Calu3 (cell line): ENCODE measurements at regions of chr20 and their contacts with region 1.

Region 1: GRCh38 chr20:50663095-50663850 is 28.1 kb downstream of the RIPOR3 start:
- DNase-seq: peak; percentile 79
- H3K4me3 Mint-ChIP-seq: no peak overlapping the region
- H3K27ac Mint-ChIP-seq: peak overlapping the region; percentile 83
- H3K4me1 Mint-ChIP-seq: peaks cover 84% of the 10 kb centered on the region
- H3K27me3 Mint-ChIP-seq: no peaks in the 10 kb centered on the region
- CTCF ChIP-seq: peak; percentile 63

Region 2: GRCh38 chr20:50635667-50636503 is 27.4 kb before region 1 on chr20:
- CTCF ChIA-PET with region 1: interaction called, 10 read pairs
- intact Hi-C with region 1: no loop called
- DNase-seq: peak; percentile 96
- H3K4me3 Mint-ChIP-seq: peak overlapping the region; percentile 15
- H3K27ac Mint-ChIP-seq: peak overlapping the region; percentile 48
- H3K4me1 Mint-ChIP-seq: peaks cover 39% of the 10 kb centered on the region
- H3K27me3 Mint-ChIP-seq: no peaks in the 10 kb centered on the region
- CTCF ChIP-seq: peak; percentile 99

Region 3: GRCh38 chr20:50680412-50680908 is 17.2 kb after region 1 on chr20:
- CTCF ChIA-PET with region 1: interaction called, 18 read pairs
- intact Hi-C with region 1: loop called (anchors 2 kb)
- DNase-seq: peak; percentile 83
- H3K4me3 Mint-ChIP-seq: peak overlapping the region; percentile 62
- H3K27ac Mint-ChIP-seq: peak overlapping the region; percentile 84
- H3K4me1 Mint-ChIP-seq: peaks cover 48% of the 10 kb centered on the region
- H3K27me3 Mint-ChIP-seq: no peaks in the 10 kb centered on the region
- CTCF ChIP-seq: no peak

Region 4: DNA sequence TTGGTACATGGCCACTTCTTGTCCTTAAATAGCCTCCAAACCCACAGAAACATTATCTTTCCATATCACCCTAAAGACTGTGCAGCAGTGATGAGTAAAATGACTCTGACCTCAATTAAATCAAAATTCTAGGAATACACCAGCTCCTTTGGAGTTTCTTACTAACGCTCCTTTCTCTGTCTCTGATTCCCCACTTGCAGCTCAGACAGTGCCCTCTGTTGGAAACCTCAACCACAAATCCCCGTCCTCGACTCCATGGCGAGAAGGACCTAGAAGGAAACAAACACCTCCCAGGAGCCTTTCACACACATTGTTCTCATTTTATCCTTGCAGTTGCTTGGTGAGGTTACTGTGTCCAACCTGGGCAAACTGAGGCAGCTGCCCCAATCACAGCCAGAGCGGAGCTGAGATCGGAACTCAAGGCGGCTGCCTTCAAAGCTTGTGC is 50.4 kb after region 1 on chr20:
- CTCF ChIA-PET with region 1: interaction called, 19 read pairs
- intact Hi-C with region 1: loop called (anchors 2 kb)
- DNase-seq: peak; percentile 59
- H3K4me3 Mint-ChIP-seq: no peak overlapping the region
- H3K27ac Mint-ChIP-seq: no peak overlapping the region
- H3K4me1 Mint-ChIP-seq: peaks cover 55% of the 10 kb centered on the region
- H3K27me3 Mint-ChIP-seq: no peaks in the 10 kb centered on the region
- CTCF ChIP-seq: peak; percentile 38

Region 5: GRCh38 chr20:50737352-50737751 is 74.1 kb after region 1 on chr20:
- CTCF ChIA-PET with region 1: interaction called, 82 read pairs
- intact Hi-C with region 1: loop called (anchors 2 kb)
- DNase-seq: peak; percentile 46
- H3K4me3 Mint-ChIP-seq: peak overlapping the region; percentile 61
- H3K27ac Mint-ChIP-seq: peak overlapping the region; percentile 99
- H3K4me1 Mint-ChIP-seq: peaks cover 63% of the 10 kb centered on the region
- H3K27me3 Mint-ChIP-seq: no peaks in the 10 kb centered on the region
- CTCF ChIP-seq: no peak

Region 6: DNA sequence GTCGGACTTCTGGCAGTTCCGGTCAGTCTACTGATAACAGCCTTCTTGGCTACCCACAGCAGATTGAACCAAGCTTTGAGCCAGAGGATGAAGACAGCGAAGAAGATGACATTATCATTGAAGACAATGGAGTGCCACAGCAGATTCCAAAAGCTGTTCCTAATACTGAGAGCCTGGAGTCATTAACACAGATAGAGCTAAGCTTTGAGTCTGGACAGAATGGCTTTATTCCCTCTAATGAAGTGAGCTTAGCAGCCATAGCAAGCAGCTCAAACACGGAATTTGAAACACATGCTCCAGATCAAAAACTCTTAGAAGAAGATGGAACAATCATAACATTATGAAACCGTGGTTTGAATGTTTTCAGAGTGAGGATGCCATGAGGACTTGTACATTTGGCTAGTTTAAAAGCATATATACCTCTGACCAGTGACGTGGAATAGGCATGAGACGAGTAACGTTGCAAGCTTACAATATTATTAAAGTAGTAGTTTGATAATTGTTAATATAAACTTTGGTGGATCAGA is 86.9 kb after region 1 on chr20:
- CTCF ChIA-PET with region 1: interaction called, 67 read pairs
- intact Hi-C with region 1: loop called (anchors 2 kb)
- DNase-seq: no peak
- H3K4me3 Mint-ChIP-seq: peak overlapping the region; percentile 39
- H3K27ac Mint-ChIP-seq: peak overlapping the region; percentile 86
- H3K4me1 Mint-ChIP-seq: peaks cover 67% of the 10 kb centered on the region
- H3K27me3 Mint-ChIP-seq: no peaks in the 10 kb centered on the region
- CTCF ChIP-seq: no peak